ENCODE measurements at regions of chr4 and their contacts with region 1.

Region 1: DNA sequence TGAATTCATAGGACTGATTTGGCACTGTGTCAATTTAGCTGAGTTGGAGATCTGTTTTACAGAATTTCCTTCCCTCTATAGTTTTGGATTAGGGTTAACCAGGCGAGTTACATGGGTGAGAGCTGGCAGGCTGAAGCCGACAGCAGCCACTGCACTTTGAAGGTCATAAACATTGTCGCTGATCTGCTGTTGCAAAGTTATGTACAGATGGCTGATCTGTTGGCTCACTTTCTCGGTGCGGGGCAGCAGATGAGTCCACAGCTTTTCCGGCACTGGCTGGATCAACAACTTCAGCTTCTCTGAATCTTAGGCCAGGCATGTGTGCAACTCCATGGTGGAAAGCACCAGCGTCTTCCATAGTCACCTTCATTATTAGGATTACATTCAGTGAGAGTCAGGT is 173.7 kb downstream of the GPAT3 start:
- DNase-seq: no peak
- H3K4me3 ChIP-seq: no peak overlapping the region
- CTCF ChIP-seq: no peak
- POLR2A ChIP-seq: no peak

Region 2: GRCh38 chr4:83455281-83456129 is 254.1 kb before region 1 on chr4 and contains the starts of genes HELQ and MRPS18C:
- intact Hi-C with region 1: loop called (anchors 5 kb)
- DNase-seq: peak; percentile 98 to 99
- H3K4me3 ChIP-seq: peak within 1 kb of the TSS; percentile 91
- CTCF ChIP-seq: no peak
- POLR2A ChIP-seq: no peak
- total RNA-seq, gene HELQ: 11.6 to 22.3 (median 13.6) TPM
- total RNA-seq, gene MRPS18C: 6.9 to 20.1 (median 15.1) TPM

Region 3: DNA sequence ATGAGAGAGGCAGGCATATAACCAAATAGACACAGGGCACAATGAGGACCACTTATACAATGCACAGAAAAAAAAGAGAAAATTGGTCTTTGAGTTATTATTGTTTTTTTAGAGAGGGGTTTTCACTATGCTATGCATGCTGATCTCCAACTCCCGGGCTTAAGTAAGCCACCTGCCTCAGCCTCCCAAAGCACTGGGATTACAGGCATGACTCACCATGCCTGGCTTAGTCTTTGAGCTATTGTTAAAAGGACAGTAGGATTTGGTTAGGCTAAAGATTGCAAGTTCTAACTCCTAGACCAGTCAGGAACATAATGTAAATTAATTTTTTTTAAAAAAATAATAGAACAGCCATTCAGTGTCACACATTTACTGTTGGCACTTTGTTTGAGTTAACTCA is 166.4 kb after region 1 on chr4:
- intact Hi-C with region 1: no loop called
- DNase-seq: no peak
- H3K4me3 ChIP-seq: no peak overlapping the region
- CTCF ChIP-seq: no peak
- POLR2A ChIP-seq: no peak

Region 4: DNA sequence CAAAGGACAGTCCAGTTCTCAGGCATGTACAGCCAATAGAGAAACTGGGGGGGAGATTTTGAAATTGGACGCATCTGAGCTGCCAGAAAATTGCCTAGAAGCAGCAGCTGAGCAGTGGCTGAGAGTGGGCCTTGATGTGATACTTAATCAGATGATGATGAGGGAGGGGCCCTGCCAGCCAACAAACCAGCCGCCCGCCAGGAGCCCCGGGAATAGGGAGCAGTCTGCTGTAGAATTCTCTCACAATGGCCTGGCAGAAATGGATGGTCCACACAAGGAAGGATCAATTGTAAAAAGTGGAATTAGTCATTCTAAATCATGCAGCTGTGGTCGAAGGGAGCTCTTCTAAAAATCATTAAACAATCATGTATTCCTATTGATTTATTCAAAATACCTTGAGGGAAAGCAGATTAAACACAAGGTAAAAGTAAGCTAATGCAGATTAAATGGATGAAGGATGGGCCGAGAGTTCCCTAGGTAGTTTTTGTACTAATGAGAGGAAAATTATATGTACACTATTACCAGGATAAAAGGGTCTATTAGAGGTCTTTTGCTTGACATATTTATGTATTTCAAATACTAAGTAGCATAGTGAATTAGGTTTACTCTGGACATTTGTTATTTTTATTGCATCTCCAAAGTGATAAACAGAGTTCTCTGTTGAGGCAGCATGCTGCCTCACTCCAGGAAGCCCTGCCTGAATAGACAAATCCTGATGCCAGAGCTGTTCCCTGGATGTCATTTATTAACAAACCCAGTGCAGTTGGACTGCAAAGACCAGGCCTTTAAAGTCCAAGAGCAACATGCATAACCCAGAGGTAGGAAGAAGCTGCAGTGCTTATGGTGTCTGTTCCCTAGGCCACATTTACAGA is 698.1 kb after region 1 on chr4:
- intact Hi-C with region 1: no loop called
- DNase-seq: no peak
- H3K4me3 ChIP-seq: no peak overlapping the region
- CTCF ChIP-seq: no peak
- POLR2A ChIP-seq: no peak

Measured in lower leg skin (tissue), 4 donors.